ENCODE measurements at regions of chr1 and their contacts with region 1.

Region 1: GRCh38 chr1:208211921-208212843 is 32.0 kb downstream of the PLXNA2 start:
- DNase-seq: no peak

Region 2: DNA sequence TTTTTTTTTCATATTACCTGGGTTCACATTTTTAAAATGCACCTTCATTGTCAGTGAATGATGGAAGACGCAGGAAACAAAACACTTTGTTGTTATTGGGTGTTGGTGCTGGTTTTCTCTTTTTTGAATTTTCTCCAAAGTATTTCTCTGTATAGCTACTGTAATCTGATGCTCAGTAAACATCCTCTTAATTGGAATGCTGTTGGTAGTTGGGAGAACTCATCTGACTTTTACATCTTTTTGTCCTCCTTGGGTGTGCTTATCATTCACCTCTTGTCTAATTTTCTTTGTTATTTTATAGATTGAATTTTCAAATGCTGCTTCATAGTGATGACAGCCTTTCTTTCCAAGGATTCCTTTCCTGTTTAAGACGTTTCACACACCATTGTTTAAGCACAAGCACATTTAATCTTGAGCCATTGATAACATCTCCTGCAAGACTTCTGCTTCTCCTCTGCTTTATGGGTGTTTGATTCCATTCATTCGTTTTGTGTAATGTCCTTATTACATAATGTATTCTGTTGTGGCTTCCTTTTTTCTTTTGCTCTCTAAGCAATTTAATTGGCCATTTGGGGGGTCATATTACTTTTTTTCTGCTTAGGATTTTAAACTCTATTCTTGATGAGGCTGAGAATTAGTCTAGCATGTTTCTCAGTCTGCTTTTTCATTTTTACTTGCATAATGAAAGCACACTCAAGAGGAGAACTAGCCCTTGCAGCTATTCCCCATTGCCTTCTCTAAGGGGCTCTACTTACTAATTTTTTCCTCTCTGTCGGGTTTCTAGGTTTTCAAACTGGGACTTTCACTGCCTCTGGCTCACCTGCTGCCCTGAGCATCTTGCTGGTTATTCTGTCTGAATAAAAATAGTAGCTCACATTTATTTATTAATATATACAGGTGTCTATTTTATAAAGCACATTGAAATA is 259.3 kb before region 1 on chr1:
- intact Hi-C with region 1: no loop called
- DNase-seq: no peak

Region 3: GRCh38 chr1:208159555-208160258 is 52.5 kb before region 1 on chr1:
- intact Hi-C with region 1: no loop called
- DNase-seq: no peak

Region 4: DNA sequence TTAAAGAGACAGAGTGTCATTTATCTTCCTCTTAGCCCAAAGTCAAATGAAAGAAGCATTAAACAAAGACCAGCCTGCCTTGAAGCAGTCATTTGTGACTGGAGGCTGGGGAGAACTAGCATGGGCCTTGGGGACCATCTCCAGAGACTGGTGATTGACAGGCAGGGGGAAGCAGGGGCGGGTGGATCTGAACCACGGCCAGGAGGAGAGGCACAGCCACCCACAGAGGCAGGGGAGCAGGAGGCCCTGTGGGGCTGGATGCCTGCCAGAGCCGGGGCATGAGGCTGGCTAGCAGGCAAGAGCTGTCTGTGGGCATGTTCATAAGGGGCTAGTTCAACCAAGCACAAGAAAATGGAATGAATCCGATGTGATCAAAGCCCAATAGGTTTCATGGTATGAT is 41.9 kb before region 1 on chr1:
- intact Hi-C with region 1: loop called (anchors 5 kb)
- DNase-seq: peak; percentile 82

Measured in cardiac septum (tissue), 1 donor.